Adrenal gland (tissue), 19 donors: ENCODE measurements at regions of chrX and their contacts with region 1.

Region 1: GRCh38 chrX:16882702-16883486 is 12.7 kb upstream of the RBBP7 start:
- DNase-seq: peak; percentile 65 to 89 (median 73)
- H3K4me3 ChIP-seq: peak overlapping the region in 2 of 4 donors; percentile 23 to 47
- H3K27ac ChIP-seq: peak overlapping the region; percentile 43 to 89 (median 65)
- H3K4me1 ChIP-seq: no peaks in the 10 kb centered on the region
- H3K27me3 ChIP-seq: peaks cover 19% of the 10 kb centered on the region
- CTCF ChIP-seq: peak; percentile 34 to 69 (median 66)
- POLR2A ChIP-seq: peak in 1 of 2 donors; percentile 51

Region 2: GRCh38 chrX:17009856-17010625 is 127.1 kb after region 1 on chrX:
- intact Hi-C with region 1: no loop called
- DNase-seq: no peak
- H3K4me3 ChIP-seq: no peak overlapping the region
- H3K27ac ChIP-seq: no peak overlapping the region
- H3K4me1 ChIP-seq: no peaks in the 10 kb centered on the region
- H3K27me3 ChIP-seq: no peaks in the 10 kb centered on the region
- CTCF ChIP-seq: no peak
- POLR2A ChIP-seq: no peak

Region 3: DNA sequence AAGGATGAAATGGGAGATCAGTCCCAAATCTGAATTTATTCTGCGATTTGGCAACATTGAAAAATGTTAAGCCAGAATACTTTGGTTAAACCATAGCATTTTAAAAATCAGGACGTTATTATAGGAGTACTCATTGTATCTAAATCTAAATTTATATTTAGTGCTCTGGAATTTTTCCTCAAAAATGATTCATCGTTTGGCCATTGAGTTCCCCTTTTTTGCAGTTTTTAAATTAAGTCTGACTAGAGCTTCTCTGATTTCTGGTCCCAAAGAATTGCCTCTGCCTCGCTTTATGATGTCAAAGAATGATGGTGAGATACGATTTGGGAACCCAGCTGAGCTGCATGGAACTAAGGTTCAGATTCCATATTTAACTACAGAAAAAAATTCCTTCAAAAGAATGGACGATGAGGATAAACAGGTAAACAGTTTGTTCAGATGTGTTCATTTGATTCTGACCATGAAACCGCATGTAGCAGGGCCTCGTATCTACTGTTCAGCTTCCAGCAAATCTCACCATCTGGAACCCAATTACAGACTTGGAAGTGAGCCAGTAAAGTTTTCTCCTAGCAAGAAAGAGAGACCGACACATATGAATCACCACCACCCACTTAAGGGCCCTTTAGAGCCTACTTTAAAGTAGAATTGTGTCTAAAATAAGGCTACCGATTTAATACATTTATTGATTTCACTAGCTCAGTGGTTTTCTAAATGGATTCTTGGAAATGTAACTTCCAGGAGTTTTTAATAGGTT is 139.1 kb after region 1 on chrX:
- intact Hi-C with region 1: no loop called
- DNase-seq: peak in 1 of 7 donors; percentile 8
- H3K4me3 ChIP-seq: no peak overlapping the region
- H3K27ac ChIP-seq: no peak overlapping the region
- H3K4me1 ChIP-seq: no peaks in the 10 kb centered on the region
- H3K27me3 ChIP-seq: no peaks in the 10 kb centered on the region
- CTCF ChIP-seq: no peak
- POLR2A ChIP-seq: no peak

Region 4: GRCh38 chrX:17039826-17040225 is 156.9 kb after region 1 on chrX:
- intact Hi-C with region 1: loop called (anchors 5 to 10 kb)
- DNase-seq: no peak
- H3K4me3 ChIP-seq: no peak overlapping the region
- H3K27ac ChIP-seq: peak overlapping the region in 2 of 5 donors; percentile 64 to 84
- H3K4me1 ChIP-seq: peaks cover 0 to 22% of the 10 kb centered on the region in 2 donors
- H3K27me3 ChIP-seq: peaks cover 4% of the 10 kb centered on the region
- CTCF ChIP-seq: no peak
- POLR2A ChIP-seq: no peak

Region 5: GRCh38 chrX:17046478-17047097 is 163.7 kb after region 1 on chrX:
- intact Hi-C with region 1: loop called (anchors 5 to 10 kb)
- DNase-seq: peak; percentile 64 to 91 (median 75)
- H3K4me3 ChIP-seq: no peak overlapping the region
- H3K27ac ChIP-seq: peak overlapping the region in 1 of 5 donors; percentile 7
- H3K4me1 ChIP-seq: no peaks in the 10 kb centered on the region
- H3K27me3 ChIP-seq: no peaks in the 10 kb centered on the region
- CTCF ChIP-seq: peak; percentile 69 to 85 (median 74)
- POLR2A ChIP-seq: no peak

Region 6: DNA sequence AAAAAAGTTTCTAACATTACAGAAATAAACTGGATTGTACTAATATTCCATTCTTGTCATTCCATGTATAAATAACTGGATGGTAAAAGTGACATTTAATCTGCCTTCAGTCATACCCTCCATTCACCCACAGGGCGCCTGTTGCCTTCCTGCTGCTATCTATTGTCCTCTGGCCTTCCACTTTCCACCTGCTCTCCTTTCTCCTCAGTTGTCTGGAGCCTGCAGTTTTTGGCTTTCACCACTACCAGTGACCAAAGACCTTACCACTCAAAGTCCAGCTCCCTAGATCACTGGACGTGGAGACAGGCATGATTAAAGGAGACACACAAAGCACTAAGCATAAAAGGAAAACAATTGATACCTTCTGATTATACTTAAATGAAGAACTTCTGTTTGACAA is 445.9 kb after region 1 on chrX:
- intact Hi-C with region 1: no loop called
- DNase-seq: no peak
- H3K4me3 ChIP-seq: no peak overlapping the region
- H3K27ac ChIP-seq: no peak overlapping the region
- H3K4me1 ChIP-seq: no peaks in the 10 kb centered on the region
- H3K27me3 ChIP-seq: no peaks in the 10 kb centered on the region
- CTCF ChIP-seq: no peak
- POLR2A ChIP-seq: no peak